ENCODE measurements at regions of chr6 and their contacts with region 1.

Region 1: GRCh38 chr6:136226027-136226673 is 24.0 kb downstream of the MTFR2 start:
- DNase-seq: peak; percentile 74
- ATAC-seq: peak; percentile 93
- H3K4me3 Mint-ChIP-seq: no peak overlapping the region
- H3K27ac Mint-ChIP-seq: no peak overlapping the region
- H3K4me1 Mint-ChIP-seq: peaks cover 9% of the 10 kb centered on the region
- H3K27me3 Mint-ChIP-seq: no peaks in the 10 kb centered on the region
- CTCF ChIP-seq: peak; percentile 100

Region 2: GRCh38 chr6:135451693-135452092 is 774.5 kb before region 1 on chr6:
- CTCF ChIA-PET with region 1: interaction called, 27 read pairs
- POLR2A ChIA-PET with region 1: interaction called, 3 read pairs
- intact Hi-C with region 1: no loop called
- DNase-seq: no peak
- ATAC-seq: no peak
- H3K4me3 Mint-ChIP-seq: no peak overlapping the region
- H3K27ac Mint-ChIP-seq: no peak overlapping the region
- H3K4me1 Mint-ChIP-seq: peaks cover 2% of the 10 kb centered on the region
- H3K27me3 Mint-ChIP-seq: no peaks in the 10 kb centered on the region
- CTCF ChIP-seq: peak; percentile 80

Region 3: DNA sequence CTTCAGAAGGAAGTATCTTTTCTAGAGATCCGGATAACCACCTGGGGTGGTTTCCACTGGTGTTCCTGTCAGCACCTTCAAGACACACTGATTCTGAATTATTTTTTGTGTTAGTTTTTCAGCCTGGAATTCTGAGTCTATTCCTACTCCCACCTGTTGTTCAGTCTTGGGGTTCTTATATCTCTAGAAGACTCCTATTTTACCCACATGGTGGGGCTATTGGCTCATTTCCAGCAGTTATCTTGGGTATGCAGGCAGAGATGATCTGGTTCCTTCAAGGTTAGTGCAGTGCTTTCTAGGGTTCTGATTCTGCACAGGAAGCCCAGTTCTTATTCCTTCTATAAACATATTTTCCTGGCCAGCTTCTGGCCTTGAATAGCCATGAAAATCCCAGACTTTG is 550.3 kb before region 1 on chr6:
- CTCF ChIA-PET with region 1: interaction called, 14 read pairs
- POLR2A ChIA-PET with region 1: no interaction called
- intact Hi-C with region 1: loop called (anchors 5 kb)
- DNase-seq: peak; percentile 54
- ATAC-seq: peak; percentile 61
- H3K4me3 Mint-ChIP-seq: no peak overlapping the region
- H3K27ac Mint-ChIP-seq: no peak overlapping the region
- H3K4me1 Mint-ChIP-seq: peaks cover 28% of the 10 kb centered on the region
- H3K27me3 Mint-ChIP-seq: no peaks in the 10 kb centered on the region
- CTCF ChIP-seq: peak; percentile 74

Region 4: GRCh38 chr6:135909737-135910387 is 316.3 kb before region 1 on chr6:
- CTCF ChIA-PET with region 1: interaction called, 12 read pairs
- POLR2A ChIA-PET with region 1: no interaction called
- intact Hi-C with region 1: loop called (anchors 10 kb)
- DNase-seq: peak; percentile 74
- ATAC-seq: peak; percentile 91
- H3K4me3 Mint-ChIP-seq: no peak overlapping the region
- H3K27ac Mint-ChIP-seq: no peak overlapping the region
- H3K4me1 Mint-ChIP-seq: peaks cover 12% of the 10 kb centered on the region
- H3K27me3 Mint-ChIP-seq: no peaks in the 10 kb centered on the region
- CTCF ChIP-seq: peak; percentile 69

Region 5: DNA sequence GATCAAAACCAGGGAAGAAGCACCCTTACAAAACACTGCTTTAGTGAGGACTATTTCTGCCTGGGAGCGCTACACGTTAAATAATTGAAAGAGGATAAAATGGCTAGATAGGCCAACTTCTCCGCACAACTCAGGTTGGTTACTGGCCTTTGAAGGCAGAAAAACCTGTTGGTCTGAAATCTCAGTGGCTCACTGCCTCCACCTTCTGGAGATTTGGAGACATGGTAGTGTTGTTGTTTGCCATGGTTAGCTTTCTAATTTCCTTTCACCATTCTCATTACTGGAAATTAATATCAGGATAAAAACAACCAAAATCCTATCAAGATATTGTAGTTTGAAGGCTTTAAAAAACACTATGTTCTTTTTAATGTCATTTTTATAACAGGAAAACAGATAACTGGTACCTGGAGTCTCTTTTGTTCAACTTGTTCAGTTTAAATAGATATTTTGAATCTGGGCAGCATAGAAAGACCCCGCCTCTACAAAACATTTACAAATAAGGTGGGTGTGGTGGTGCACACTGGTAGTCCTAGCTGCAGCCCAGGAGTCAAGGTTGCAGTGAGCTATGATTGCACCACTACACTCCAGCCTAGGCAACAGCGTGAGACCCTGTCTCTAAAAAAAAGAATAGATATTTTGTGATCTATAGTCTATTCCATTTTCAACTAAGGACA is 91.0 kb after region 1 on chr6:
- CTCF ChIA-PET with region 1: interaction called, 18 read pairs
- POLR2A ChIA-PET with region 1: no interaction called
- intact Hi-C with region 1: no loop called
- DNase-seq: peak; percentile 74
- ATAC-seq: peak; percentile 88
- H3K4me3 Mint-ChIP-seq: no peak overlapping the region
- H3K27ac Mint-ChIP-seq: no peak overlapping the region
- H3K4me1 Mint-ChIP-seq: no peaks in the 10 kb centered on the region
- H3K27me3 Mint-ChIP-seq: peaks cover 2% of the 10 kb centered on the region
- CTCF ChIP-seq: peak; percentile 77

Measured in activated CD8-positive, alpha-beta T cell treated with anti-CD3 and anti-CD28 coated beads for 36 hours (primary cell).